Aorta (tissue), 5 donors: ENCODE measurements at regions of chr3 and their contacts with region 1.

Region 1: DNA sequence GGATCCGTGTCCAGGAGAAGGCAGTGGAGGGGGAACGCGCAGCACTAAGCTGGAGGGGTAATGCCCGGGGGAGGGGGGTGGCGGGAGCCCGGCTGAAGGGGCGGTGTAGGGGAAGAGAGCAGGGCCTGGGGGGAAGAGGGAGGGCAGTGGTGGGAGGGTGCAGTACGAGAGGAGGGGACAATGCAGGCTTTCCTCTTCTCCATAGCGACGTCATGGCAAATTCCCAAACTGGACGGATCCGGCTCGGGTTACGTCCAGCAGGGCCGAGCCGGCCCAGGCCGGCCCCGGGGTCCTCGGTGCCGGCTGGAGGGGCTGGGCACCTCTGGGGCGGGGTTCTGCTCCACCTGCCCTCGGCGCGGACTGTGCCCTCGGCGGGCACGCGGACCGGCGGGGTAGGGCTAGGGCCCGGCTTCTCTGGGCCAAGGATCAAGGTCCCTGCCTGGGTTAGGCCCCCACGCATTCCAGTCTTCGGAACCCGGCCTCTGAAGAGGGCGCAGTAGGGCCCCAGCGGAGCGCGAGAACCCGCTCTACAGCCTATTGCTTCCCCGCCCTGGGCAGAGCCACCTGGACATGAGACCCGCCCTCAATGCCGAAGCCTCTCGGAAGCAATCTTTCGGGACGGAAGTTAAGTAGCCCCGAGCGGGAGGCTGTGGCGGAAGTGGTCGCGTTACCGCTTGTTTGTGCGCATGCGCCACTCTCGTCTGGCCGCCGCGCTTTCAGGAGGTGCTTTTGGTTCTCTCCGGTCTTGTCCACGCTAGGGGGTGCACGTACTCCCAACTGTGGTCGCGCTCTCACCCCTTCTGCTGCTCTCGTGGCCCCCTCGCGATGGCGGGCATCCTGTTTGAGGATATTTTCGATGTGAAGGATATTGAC is 1.4 kb downstream of the POLR2H start:
- DNase-seq: peak; percentile 97 to 98
- ATAC-seq: peak; percentile 93
- H3K4me3 ChIP-seq: peak overlapping the region; percentile 78 to 85
- H3K27ac ChIP-seq: peak overlapping the region; percentile 91 to 96
- H3K4me1 ChIP-seq: no peaks in the 10 kb centered on the region
- H3K27me3 ChIP-seq: no peaks in the 10 kb centered on the region

Region 2: GRCh38 chr3:184314363-184314699 is 48.6 kb before region 1 on chr3 and contains the start of gene EIF4G1:
- intact Hi-C with region 1: loop called in 1 of 2 experiments (anchors 2 kb)
- DNase-seq: peak; percentile 96 to 98
- ATAC-seq: peak; percentile 94
- H3K4me3 ChIP-seq: peak within 1 kb of the TSS; percentile 87 to 95
- H3K27ac ChIP-seq: peak within 1 kb of the TSS; percentile 51 to 96
- H3K4me1 ChIP-seq: peaks cover 0 to 6% of the 10 kb centered on the region in 2 donors
- H3K27me3 ChIP-seq: no peaks in the 10 kb centered on the region
- total RNA-seq, gene EIF4G1: 234 to 285 TPM

Region 3: GRCh38 chr3:184884359-184885017 is 521.6 kb after region 1 on chr3:
- intact Hi-C with region 1: no loop called
- DNase-seq: no peak
- ATAC-seq: no peak
- H3K4me3 ChIP-seq: no peak overlapping the region
- H3K27ac ChIP-seq: no peak overlapping the region
- H3K4me1 ChIP-seq: no peaks in the 10 kb centered on the region
- H3K27me3 ChIP-seq: no peaks in the 10 kb centered on the region